Lower lobe of right lung (tissue), 2 donors: ENCODE measurements at regions of chr6 and their contacts with region 1.

Region 1: GRCh38 chr6:70706491-70707123 is 38.9 kb downstream of the SMAP1 start:
- DNase-seq: no peak
- ATAC-seq: no peak
- H3K4me3 ChIP-seq: no peak overlapping the region
- H3K27ac ChIP-seq: no peak overlapping the region
- H3K4me1 ChIP-seq: peaks cover 11% of the 10 kb centered on the region
- H3K27me3 ChIP-seq: no peaks in the 10 kb centered on the region
- CTCF ChIP-seq: peak; percentile 63

Region 2: DNA sequence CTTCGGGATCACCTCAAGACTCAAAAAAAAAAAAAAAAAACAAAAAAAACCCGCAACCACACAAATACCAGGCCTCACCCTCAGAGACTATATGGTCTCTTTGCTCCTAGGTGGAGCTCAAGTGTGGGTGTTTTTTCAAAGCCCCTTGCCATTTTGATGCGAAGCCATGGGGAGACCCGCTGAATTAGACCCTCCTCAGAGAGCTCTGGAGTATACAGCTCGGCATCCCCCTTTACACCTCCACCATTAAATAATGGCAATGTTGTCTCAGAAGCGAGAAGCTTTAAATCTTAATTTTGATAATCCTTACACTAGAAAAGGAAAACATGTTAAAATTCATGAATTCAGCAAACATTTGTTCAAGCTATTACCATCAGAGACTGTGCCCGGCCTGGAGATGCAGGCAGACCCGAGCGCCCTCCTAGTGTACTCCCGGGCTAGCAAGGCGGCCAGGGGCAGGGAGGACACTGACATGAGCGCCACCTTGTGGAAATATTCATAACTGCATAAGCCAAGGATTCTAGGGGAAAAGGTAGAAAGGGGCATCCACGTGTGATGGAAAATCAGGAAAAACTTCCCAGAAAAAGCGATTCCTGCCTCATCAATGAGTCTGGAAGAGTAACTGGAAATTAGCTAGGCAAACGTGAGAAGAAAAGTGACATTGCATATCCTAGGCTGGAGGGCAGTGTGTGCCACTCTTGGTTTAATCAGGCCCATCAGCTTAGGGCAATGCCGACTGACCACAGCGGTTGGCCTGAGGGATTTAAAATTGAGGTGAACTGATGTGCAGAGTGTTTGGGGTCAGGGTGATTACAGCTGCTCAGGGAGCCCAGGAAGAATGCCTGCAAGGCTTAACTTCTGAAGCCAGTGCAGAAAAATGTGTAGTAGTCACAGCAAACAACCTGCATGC is 177.7 kb after region 1 on chr6:
- intact Hi-C with region 1: loop called (anchors 5 kb)
- DNase-seq: peak; percentile 55
- ATAC-seq: peak; percentile 81 to 84
- H3K4me3 ChIP-seq: no peak overlapping the region
- H3K27ac ChIP-seq: no peak overlapping the region
- H3K4me1 ChIP-seq: no peaks in the 10 kb centered on the region
- H3K27me3 ChIP-seq: peaks cover 9% of the 10 kb centered on the region
- CTCF ChIP-seq: peak; percentile 94